ENCODE measurements at regions of chr7 and their contacts with region 1.

Region 1: GRCh38 chr7:130096243-130096827 is 26.0 kb downstream of the KLHDC10 start:
- DNase-seq: no peak
- ATAC-seq: no peak
- H3K4me3 ChIP-seq: no peak overlapping the region
- H3K27ac ChIP-seq: no peak overlapping the region
- H3K4me1 ChIP-seq: no peaks in the 10 kb centered on the region
- H3K27me3 ChIP-seq: no peaks in the 10 kb centered on the region
- CTCF ChIP-seq: peak; percentile 47; the same call in 1 of the 2 replicates

Region 2: DNA sequence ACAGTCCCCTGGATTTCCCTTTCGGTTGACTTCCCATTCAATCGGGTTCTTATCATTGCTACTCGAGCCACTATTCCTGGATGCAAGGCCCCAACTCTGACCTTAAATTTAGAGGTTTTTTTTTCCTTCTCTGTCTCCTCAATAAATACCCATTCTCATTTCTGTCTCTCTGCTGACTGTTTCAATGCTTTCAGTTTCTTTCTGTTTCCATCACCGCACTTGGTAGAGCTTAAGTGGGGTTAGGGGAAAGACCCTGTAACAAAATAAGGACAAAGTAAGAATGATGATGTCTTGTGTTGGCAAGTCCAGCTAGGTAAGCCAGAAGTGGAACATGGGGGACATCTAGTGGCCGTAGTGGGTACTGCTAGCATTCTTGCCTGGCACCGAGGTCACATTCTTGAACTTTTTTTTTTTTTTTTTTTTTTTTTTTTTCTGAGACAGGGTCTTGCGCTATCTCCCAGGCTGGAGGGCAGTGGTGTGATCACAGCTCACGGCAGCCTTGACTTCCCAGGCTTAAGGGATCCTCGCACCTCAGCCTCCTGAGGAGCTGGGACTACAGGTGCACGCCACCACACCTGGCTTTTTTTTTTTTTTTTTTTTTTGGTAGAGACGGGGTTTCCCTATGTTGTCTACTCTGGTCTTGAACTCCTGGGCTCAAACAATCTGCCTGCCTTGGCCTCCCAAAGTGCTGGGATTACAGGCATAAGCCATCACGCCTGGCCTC is 85.5 kb before region 1 on chr7:
- CTCF ChIA-PET with region 1: no interaction called
- POLR2A ChIA-PET with region 1: no interaction called
- intact Hi-C with region 1: no loop called
- DNase-seq: peak; percentile 91
- ATAC-seq: 0 out of 2 replicates have a peak, but pooled peaks have one; percentile 3
- H3K4me3 ChIP-seq: no peak overlapping the region
- H3K27ac ChIP-seq: peak overlapping the region; percentile 98
- H3K4me1 ChIP-seq: peaks cover 26% of the 10 kb centered on the region
- H3K27me3 ChIP-seq: no peaks in the 10 kb centered on the region
- CTCF ChIP-seq: peak; percentile 88

Region 3: DNA sequence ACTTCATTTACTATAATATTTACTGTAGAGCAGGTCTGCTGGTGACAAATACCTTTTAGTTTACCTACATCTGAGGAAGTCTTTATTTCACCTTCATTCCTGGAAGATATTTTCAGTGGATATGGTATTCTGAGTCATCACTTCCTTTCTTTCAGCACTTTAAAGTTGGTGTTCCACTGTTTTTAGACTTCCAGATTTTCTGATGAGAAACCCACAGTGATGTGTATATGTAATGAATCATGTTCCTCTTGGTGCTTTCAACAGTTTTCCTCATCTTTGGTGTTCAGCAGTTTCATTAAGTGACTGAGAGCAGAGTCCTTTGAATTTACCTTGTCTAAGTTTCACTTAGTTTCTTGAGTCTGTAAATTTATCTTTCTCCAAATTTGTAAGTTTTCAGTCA is 535.8 kb after region 1 on chr7:
- CTCF ChIA-PET with region 1: no interaction called
- POLR2A ChIA-PET with region 1: interaction called, 11 read pairs
- intact Hi-C with region 1: no loop called
- DNase-seq: peak; percentile 81
- ATAC-seq: peak; percentile 98
- H3K4me3 ChIP-seq: no peak overlapping the region
- H3K27ac ChIP-seq: no peak overlapping the region
- H3K4me1 ChIP-seq: peaks cover 10% of the 10 kb centered on the region
- H3K27me3 ChIP-seq: no peaks in the 10 kb centered on the region
- CTCF ChIP-seq: no peak

Measured in PC-3 (cell line).